T-cell (primary cell): ENCODE measurements at regions of chr11 and their contacts with region 1.

Region 1: GRCh38 chr11:82900277-82901164 is at the start of gene PRCP:
- DNase-seq: peak; percentile 76 to 96 (median 94)
- ATAC-seq: peak; percentile 78 to 80 (median 79)
- H3K4me3 ChIP-seq: peak within 1 kb of the TSS; percentile 89 to 92
- H3K4me3 Mint-ChIP-seq: peak within 1 kb of the TSS; percentile 88 to 99 (median 97)
- H3K27ac ChIP-seq: peak within 1 kb of the TSS; percentile 98
- H3K27ac Mint-ChIP-seq: peak within 1 kb of the TSS; percentile 98
- H3K4me1 ChIP-seq: peaks cover 13 to 34% of the 10 kb centered on the region in 2 experiments
- H3K4me1 Mint-ChIP-seq: peaks cover 42 to 50% (median 44%) of the 10 kb centered on the region in 3 donors
- H3K27me3 ChIP-seq: no peaks in the 10 kb centered on the region
- H3K27me3 Mint-ChIP-seq: no peaks in the 10 kb centered on the region
- total RNA-seq, gene PRCP: 18.1 to 22.7 (median 20.2) TPM

Region 2: GRCh38 chr11:82867495-82868082 is 32.9 kb before region 1 on chr11:
- CTCF ChIA-PET with region 1: interaction called, 11 to 42 read pairs
- POLR2A ChIA-PET with region 1: no interaction called
- DNase-seq: peak; percentile 27 to 87 (median 65)
- ATAC-seq: peak; percentile 30 to 60 (median 46)
- H3K4me3 ChIP-seq: no peak overlapping the region
- H3K4me3 Mint-ChIP-seq: peak overlapping the region in 2 of 3 donors; percentile 5 to 39
- H3K27ac ChIP-seq: no peak overlapping the region
- H3K27ac Mint-ChIP-seq: no peak overlapping the region
- H3K4me1 ChIP-seq: peaks cover 0 to 5% of the 10 kb centered on the region in 2 experiments
- H3K4me1 Mint-ChIP-seq: peaks cover 11 to 15% (median 14%) of the 10 kb centered on the region in 3 donors
- H3K27me3 ChIP-seq: no peaks in the 10 kb centered on the region
- H3K27me3 Mint-ChIP-seq: no peaks in the 10 kb centered on the region

Region 3: GRCh38 chr11:83063073-83063754 is 162.7 kb after region 1 on chr11:
- CTCF ChIA-PET with region 1: interaction called in 1 of 2 experiments, 3 read pairs
- POLR2A ChIA-PET with region 1: interaction called in 1 of 2 experiments, 11 read pairs
- DNase-seq: peak in 2 of 35 experiments; percentile 12 to 48
- ATAC-seq: peak; percentile 69 to 92 (median 82)
- H3K4me3 ChIP-seq: peak overlapping the region; percentile 6 to 34
- H3K4me3 Mint-ChIP-seq: peak overlapping the region; percentile 73 to 81 (median 80)
- H3K27ac ChIP-seq: peak overlapping the region; percentile 69
- H3K27ac Mint-ChIP-seq: peak overlapping the region; percentile 97 to 98
- H3K4me1 ChIP-seq: peaks cover 15 to 17% of the 10 kb centered on the region in 2 experiments
- H3K4me1 Mint-ChIP-seq: peaks cover 54 to 62% (median 56%) of the 10 kb centered on the region in 3 donors
- H3K27me3 ChIP-seq: no peaks in the 10 kb centered on the region
- H3K27me3 Mint-ChIP-seq: no peaks in the 10 kb centered on the region

Region 4: GRCh38 chr11:83193315-83194280 is 293.1 kb after region 1 on chr11 and contains the start of gene ANKRD42:
- CTCF ChIA-PET with region 1: no interaction called
- POLR2A ChIA-PET with region 1: interaction called, 3 to 11 read pairs
- DNase-seq: peak; percentile 67 to 95 (median 80)
- ATAC-seq: peak; percentile 80 to 88 (median 82)
- H3K4me3 ChIP-seq: peak within 1 kb of the TSS; percentile 84 to 96
- H3K4me3 Mint-ChIP-seq: peak within 1 kb of the TSS; percentile 90 to 99 (median 98)
- H3K27ac ChIP-seq: peak within 1 kb of the TSS; percentile 89
- H3K27ac Mint-ChIP-seq: peak within 1 kb of the TSS; percentile 99
- H3K4me1 ChIP-seq: peaks cover 16 to 19% of the 10 kb centered on the region in 2 experiments
- H3K4me1 Mint-ChIP-seq: peaks cover 48 to 60% (median 56%) of the 10 kb centered on the region in 3 donors
- H3K27me3 ChIP-seq: no peaks in the 10 kb centered on the region
- H3K27me3 Mint-ChIP-seq: no peaks in the 10 kb centered on the region
- total RNA-seq, gene ANKRD42: 6.2 to 9.7 (median 7.9) TPM

Region 5: DNA sequence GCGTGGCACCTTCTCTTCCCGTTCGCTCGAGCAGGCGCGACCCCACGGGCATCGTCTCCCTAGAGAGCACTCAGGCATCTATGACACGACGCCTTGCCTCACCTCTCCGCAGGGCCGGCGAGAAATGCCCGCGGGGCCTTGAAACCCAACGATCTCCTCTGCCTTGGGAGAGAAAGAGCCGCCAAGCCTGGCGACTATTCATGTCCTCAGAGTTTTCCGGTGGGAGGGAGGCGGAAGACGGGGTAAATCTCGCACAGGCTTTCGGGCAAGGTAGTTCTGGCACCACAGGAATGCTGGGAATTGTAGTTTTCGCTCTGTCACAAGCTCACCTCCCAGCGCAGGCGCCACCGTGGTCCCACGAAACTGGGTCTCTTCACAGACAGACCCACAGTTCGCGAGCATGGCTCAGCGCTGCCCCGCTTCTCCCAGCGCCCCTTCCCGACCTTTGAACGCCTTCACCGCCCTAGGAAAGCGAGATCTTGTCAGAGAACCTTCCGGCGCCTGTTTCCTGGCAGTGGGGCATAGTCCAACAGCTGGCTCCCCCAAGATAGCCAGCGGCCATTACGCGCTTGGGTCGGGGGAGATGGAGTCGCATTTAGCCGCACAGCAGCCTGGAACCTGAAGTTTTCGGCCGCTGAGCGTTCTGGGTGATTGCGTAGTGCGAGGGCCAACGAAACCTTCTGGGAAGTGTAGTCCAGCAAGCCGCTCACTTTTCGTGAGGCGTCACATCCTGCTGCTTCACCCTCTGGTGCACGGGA is 385.4 kb after region 1 on chr11 and contains the start of gene CCDC90B:
- CTCF ChIA-PET with region 1: interaction called in 1 of 2 experiments, 7 read pairs
- POLR2A ChIA-PET with region 1: interaction called, 3 to 15 read pairs
- DNase-seq: peak; percentile 88 to 97 (median 93)
- ATAC-seq: peak; percentile 89 to 94 (median 92)
- H3K4me3 ChIP-seq: peak within 1 kb of the TSS; percentile 89 to 93
- H3K4me3 Mint-ChIP-seq: peak within 1 kb of the TSS; percentile 93 to 97 (median 95)
- H3K27ac ChIP-seq: peak within 1 kb of the TSS; percentile 94
- H3K27ac Mint-ChIP-seq: peak within 1 kb of the TSS; percentile 99 to 100
- H3K4me1 ChIP-seq: peaks cover 14 to 16% of the 10 kb centered on the region in 2 experiments
- H3K4me1 Mint-ChIP-seq: peaks cover 40 to 52% (median 46%) of the 10 kb centered on the region in 3 donors
- H3K27me3 ChIP-seq: no peaks in the 10 kb centered on the region
- H3K27me3 Mint-ChIP-seq: peaks cover 0 to 3% of the 10 kb centered on the region in 2 donors
- total RNA-seq, gene CCDC90B: 24.3 to 34.4 (median 30.8) TPM